BJ (cell line): ENCODE measurements at regions of chr12 and their contacts with region 1.

Region 1: GRCh38 chr12:107093417-107094182 is at the start of gene CRY1:
- DNase-seq: peak; percentile 72
- H3K4me3 ChIP-seq: peak within 1 kb of the TSS; percentile 90
- H3K27me3 ChIP-seq: no peaks in the 10 kb centered on the region
- CTCF ChIP-seq: no peak
- polyA plus RNA-seq, gene CRY1: 6.9 and 10.9 TPM in 2 replicates

Region 2: DNA sequence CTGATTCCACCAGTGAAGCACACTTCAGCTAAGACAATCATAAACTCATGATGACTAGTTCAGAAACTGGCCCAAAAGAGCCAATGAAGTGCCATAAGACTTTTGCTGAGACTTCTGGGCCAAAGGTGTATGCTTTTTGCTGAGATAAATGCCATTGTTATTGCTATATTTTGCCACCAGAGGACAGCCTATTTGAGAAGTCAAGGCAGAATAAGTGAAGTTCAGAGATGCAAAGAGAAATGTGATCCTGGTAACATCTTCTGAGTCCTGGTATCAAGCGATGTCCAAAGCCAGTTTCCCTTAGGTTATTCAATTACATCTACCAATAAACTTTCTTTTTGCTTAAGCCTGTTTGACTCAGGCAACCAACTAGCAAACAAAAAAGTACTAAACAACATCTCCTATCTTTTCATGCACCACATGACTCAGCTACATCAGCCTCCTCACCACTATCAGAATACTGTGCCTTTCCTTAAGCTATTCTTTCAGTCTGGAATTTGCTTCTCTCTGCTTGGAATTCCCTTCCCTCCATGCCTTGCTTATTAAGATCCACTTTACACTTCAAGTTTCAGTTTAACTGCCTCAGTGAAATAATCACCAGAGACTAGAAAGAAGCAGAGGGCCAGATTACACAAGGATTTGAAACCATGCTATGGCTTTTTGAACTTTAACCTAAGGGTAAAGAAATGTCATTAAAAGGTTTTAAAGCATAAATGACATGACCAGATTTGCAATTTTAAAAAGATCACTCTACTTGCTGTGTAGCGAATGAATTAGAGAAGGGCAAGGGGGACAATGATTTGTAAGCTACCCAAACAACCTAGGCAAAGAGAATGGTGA is 14.2 kb before region 1 on chr12:
- CTCF ChIA-PET with region 1: interaction called, 33 read pairs
- POLR2A ChIA-PET with region 1: no interaction called
- DNase-seq: no peak
- H3K4me3 ChIP-seq: no peak overlapping the region
- H3K27me3 ChIP-seq: no peaks in the 10 kb centered on the region
- CTCF ChIP-seq: peak; percentile 63

Region 3: DNA sequence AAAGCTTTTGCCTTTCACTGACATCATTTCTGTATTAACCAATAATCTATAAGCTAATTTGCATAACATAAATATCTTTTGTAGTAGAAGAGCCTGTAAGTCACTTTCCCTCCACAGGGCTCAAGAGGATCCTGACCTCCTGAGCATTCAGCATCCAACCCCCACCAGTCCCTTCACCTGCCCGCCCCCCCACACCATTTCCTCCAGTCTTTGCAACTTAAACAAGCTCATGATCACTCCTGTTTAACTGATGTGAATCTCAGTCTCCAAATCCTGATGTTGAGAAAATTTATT is 11.8 kb after region 1 on chr12:
- CTCF ChIA-PET with region 1: interaction called, 79 read pairs
- POLR2A ChIA-PET with region 1: no interaction called
- DNase-seq: no peak
- H3K4me3 ChIP-seq: no peak overlapping the region
- H3K27me3 ChIP-seq: no peaks in the 10 kb centered on the region
- CTCF ChIP-seq: no peak